Calu3 (cell line): ENCODE measurements at regions of chr10 and their contacts with region 1.

Region 1: GRCh38 chr10:103859161-103860086 is 4.0 kb upstream of the SH3PXD2A start:
- DNase-seq: peak; percentile 58
- H3K4me3 Mint-ChIP-seq: no peak overlapping the region
- H3K27ac Mint-ChIP-seq: no peak overlapping the region
- H3K4me1 Mint-ChIP-seq: peaks cover 3% of the 10 kb centered on the region
- H3K27me3 Mint-ChIP-seq: peaks cover 24% of the 10 kb centered on the region
- CTCF ChIP-seq: peak; percentile 14

Region 2: GRCh38 chr10:103712570-103713498 is 146.6 kb before region 1 on chr10:
- CTCF ChIA-PET with region 1: no interaction called
- intact Hi-C with region 1: loop called (anchors 1 kb)
- DNase-seq: peak; percentile 80
- H3K4me3 Mint-ChIP-seq: no peak overlapping the region
- H3K27ac Mint-ChIP-seq: no peak overlapping the region
- H3K4me1 Mint-ChIP-seq: peaks cover 25% of the 10 kb centered on the region
- H3K27me3 Mint-ChIP-seq: peaks cover 7% of the 10 kb centered on the region
- CTCF ChIP-seq: peak; percentile 81

Region 3: DNA sequence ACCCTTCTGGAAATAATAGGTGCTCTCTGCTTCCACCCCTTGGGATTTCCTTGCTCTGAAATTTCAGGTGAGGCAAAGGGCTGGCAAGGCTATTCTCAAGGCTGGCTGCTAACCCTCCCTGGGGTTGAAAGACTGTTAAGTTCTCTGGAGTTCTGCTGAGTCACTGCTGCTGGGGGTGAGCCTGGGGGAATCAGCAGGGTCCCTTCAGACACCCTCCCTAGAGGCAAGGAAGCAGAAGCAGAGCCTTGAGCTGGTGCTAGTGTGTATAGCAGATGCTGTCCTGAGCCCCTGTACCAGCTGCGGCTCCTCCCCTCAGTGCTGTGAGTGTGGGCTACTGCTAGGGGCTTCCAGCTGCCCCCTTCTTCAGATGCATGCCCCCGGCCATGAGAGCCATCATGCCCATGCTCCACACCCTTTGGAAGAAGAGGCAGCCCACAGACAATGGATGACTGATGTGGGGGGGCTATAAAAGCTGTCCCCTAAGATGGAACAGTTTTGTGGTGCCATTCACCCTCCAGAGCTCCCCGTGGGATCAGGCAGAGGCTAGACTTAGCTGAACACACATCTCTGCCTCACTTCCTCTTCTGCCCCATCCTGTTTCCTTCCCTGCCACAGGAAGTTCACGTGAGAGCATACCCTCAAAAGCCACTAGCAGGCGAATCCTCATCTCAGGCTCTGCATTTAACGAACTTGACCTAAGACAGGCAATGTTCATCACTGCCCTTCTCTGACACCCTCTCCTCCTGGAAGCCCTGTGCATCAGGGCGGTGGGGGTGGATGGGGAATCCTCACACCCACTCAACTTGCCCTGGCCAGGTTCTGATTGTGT is 95.8 kb before region 1 on chr10:
- CTCF ChIA-PET with region 1: no interaction called
- intact Hi-C with region 1: loop called (anchors 10 kb)
- DNase-seq: no peak
- H3K4me3 Mint-ChIP-seq: no peak overlapping the region
- H3K27ac Mint-ChIP-seq: no peak overlapping the region
- H3K4me1 Mint-ChIP-seq: peaks cover 29% of the 10 kb centered on the region
- H3K27me3 Mint-ChIP-seq: peaks cover 25% of the 10 kb centered on the region
- CTCF ChIP-seq: no peak

Region 4: DNA sequence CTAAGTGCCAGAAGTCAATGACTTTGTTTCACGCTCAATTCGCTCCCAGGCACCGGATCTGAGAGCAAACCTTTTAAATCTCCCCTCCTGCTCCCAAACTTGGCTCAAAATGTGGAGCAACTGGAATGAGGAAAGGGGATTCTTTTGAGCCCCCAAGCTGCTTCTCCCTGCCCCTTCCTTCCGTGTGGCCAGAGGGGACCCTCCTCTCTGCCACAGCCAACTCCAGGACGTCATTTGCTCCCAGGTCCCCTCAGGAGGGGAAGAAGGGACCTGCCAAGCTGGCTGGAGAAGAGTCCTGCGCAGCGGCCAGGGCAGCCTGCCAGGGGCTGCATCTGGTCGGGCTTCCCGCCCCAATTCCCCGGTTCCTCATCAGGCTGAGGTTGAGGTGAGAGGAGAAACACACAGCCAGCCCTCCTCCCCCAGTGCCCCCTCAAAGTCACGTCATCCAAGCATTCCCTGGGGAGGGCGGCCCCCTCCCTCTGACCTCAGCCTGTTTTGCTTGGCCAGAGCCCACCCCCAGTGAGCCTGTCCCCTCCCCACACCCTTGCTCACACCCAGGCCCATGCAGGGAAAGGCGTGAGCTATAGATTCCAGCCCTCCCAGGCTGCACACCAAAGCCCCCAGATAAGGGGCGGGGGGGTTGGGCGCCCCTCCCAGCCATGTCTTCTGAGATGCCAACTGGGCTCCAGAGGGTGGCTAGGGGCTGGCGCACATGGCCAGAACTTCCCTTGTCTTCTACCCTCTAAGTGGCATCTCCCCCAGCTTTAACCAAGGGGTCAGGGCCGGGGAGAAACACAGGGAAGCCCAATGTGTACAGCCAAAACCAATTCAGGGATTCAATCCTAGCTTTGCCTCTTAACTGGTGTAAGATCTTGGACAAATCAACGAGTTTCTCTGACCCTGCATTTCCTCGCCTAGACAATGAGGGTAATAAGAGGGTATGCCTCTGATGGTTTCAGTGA is 39.0 kb before region 1 on chr10:
- CTCF ChIA-PET with region 1: no interaction called
- intact Hi-C with region 1: loop called (anchors 5 kb)
- DNase-seq: no peak
- H3K4me3 Mint-ChIP-seq: no peak overlapping the region
- H3K27ac Mint-ChIP-seq: no peak overlapping the region
- H3K4me1 Mint-ChIP-seq: peaks cover 16% of the 10 kb centered on the region
- H3K27me3 Mint-ChIP-seq: peaks cover 41% of the 10 kb centered on the region
- CTCF ChIP-seq: no peak